ENCODE measurements at regions of chr7 and their contacts with region 1.

Region 1: DNA sequence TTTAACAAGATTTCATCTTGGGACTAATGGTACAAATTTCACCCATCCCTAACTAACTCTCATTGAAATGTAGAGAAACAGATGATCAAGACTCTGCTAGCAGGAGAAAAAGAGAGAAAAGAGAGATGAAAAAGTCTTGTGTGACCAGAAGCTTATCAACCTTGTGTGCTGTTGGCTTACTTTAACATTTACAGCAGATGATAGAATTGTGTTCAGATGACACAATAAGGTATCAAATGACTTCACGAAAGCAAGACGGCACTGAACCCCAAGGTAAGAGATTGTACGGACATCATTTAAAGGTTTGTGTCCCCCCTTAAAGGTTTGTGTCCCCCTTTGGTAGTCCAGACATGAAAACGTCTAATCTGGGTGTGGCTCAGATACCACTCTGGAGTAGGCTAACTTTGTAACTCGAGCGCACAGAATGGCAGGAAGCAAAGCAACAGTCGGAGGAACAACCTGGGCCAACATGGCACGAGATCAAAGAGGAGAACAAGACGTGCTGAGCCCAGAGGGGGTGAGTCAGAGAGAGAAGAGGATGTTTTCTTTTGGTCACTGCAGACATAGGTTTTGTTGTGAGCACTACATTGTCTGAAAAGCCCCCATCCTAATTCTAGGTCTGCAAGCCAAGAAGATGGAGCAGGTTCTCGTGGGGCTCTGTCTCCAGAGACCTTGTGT is 10.4 kb upstream of the LMBR1 start:
- DNase-seq: peak in 4 of 5 donors; percentile 56 to 74 (median 70)
- ATAC-seq: peak; percentile 85 to 94 (median 86)
- H3K4me3 ChIP-seq: no peak overlapping the region
- H3K27ac ChIP-seq: peak overlapping the region; percentile 16 to 78 (median 60)
- H3K4me1 ChIP-seq: peaks cover 0 to 12% (median 0%) of the 10 kb centered on the region in 12 donors
- H3K27me3 ChIP-seq: no peaks in the 10 kb centered on the region
- CTCF ChIP-seq: no peak
- POLR2A ChIP-seq: no peak

Region 2: GRCh38 chr7:156949541-156950380 is 46.4 kb after region 1 on chr7 and contains the start of gene NOM1:
- intact Hi-C with region 1: loop called in 5 of 10 experiments (anchors 5 kb)
- DNase-seq: peak; percentile 89 to 97 (median 93)
- ATAC-seq: peak; percentile 76 to 99 (median 96)
- H3K4me3 ChIP-seq: peak within 1 kb of the TSS; percentile 81 to 100 (median 92)
- H3K27ac ChIP-seq: peak within 1 kb of the TSS in 11 of 12 donors; percentile 3 to 79 (median 64)
- H3K4me1 ChIP-seq: peaks cover 0 to 33% (median 20%) of the 10 kb centered on the region in 12 donors
- H3K27me3 ChIP-seq: peaks cover 0 to 23% (median 0%) of the 10 kb centered on the region in 9 donors
- CTCF ChIP-seq: peak; percentile 54 to 100 (median 81)
- POLR2A ChIP-seq: peak in 1 of 2 donors; percentile 55
- total RNA-seq, gene NOM1: 6.0 to 12.2 (median 9.1) TPM

Region 3: GRCh38 chr7:156962145-156962544 is 58.8 kb after region 1 on chr7:
- intact Hi-C with region 1: no loop called
- DNase-seq: no peak
- ATAC-seq: no peak
- H3K4me3 ChIP-seq: no peak overlapping the region
- H3K27ac ChIP-seq: no peak overlapping the region
- H3K4me1 ChIP-seq: no peaks in the 10 kb centered on the region
- H3K27me3 ChIP-seq: no peaks in the 10 kb centered on the region
- CTCF ChIP-seq: no peak
- POLR2A ChIP-seq: no peak

Region 4: GRCh38 chr7:157239571-157240270 is 336.4 kb after region 1 on chr7:
- intact Hi-C with region 1: loop called in 2 of 10 experiments (anchors 10 kb)
- DNase-seq: no peak
- ATAC-seq: no peak
- H3K4me3 ChIP-seq: no peak overlapping the region
- H3K27ac ChIP-seq: no peak overlapping the region
- H3K4me1 ChIP-seq: no peaks in the 10 kb centered on the region
- H3K27me3 ChIP-seq: no peaks in the 10 kb centered on the region
- CTCF ChIP-seq: no peak
- POLR2A ChIP-seq: no peak

Measured in heart left ventricle (tissue), 16 donors.